PC-3 (cell line): ENCODE measurements at regions of chr1 and their contacts with region 1.

Region 1: DNA sequence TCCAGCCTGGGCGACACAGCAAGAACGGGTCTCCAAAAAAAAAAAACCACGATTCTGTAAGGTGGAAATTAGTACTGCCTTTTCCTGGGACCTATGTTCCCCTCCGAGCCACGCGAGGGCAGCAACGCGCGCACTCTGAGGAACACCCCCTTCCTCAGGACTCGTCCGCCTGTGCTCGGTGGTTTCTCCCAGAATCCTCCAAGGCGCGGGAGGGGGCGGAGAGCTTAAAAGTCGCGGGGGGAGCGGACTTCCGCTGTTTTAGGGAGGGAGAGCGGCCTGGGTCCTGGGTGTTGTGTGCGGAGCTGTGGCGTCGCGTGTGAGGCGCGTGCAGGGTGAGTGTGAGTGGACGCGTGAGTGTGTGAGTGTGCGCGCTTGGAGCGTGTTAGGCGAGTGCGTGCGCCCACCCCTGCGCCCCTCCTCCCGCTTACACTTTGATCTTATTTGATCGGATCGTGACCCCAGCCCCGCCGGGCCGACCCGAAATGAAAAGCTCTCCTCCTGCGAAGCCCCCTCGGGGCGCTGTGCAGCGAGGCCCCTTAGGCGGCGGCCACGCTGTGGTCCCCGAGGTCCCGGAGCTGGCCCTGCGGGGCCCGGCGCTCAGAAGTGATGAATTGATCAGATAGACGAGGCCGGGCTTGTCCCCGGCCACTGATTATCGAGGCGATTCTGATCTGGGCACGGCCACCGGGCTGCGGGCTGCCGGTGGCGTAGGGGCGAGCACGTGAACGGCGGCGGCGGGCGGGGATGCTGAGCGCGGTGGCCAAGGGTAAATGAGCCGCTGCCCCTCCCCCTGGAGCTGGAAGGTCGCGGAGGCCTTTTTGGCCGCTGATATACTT is 9.6 kb downstream of the TMEM167B start:
- DNase-seq: peak; percentile 97
- ATAC-seq: peak; percentile 91
- H3K4me3 ChIP-seq: peak overlapping the region; percentile 92
- H3K27ac ChIP-seq: peak overlapping the region; percentile 41; the same call in 1 of the 2 replicates
- H3K4me1 ChIP-seq: peaks cover 11% of the 10 kb centered on the region
- H3K27me3 ChIP-seq: no peaks in the 10 kb centered on the region
- CTCF ChIP-seq: peak; percentile 85

Region 2: GRCh38 chr1:109151164-109151990 is 51.2 kb after region 1 on chr1:
- CTCF ChIA-PET with region 1: no interaction called
- POLR2A ChIA-PET with region 1: interaction called, 3 read pairs
- intact Hi-C with region 1: loop called (anchors 1 kb)
- DNase-seq: peak; percentile 55
- ATAC-seq: peak; percentile 89
- H3K4me3 ChIP-seq: no peak overlapping the region
- H3K27ac ChIP-seq: peak overlapping the region; percentile 47
- H3K4me1 ChIP-seq: peaks cover 12% of the 10 kb centered on the region
- H3K27me3 ChIP-seq: no peaks in the 10 kb centered on the region
- CTCF ChIP-seq: no peak

Region 3: GRCh38 chr1:109617291-109617863 is 517.2 kb after region 1 on chr1:
- CTCF ChIA-PET with region 1: no interaction called
- POLR2A ChIA-PET with region 1: no interaction called
- intact Hi-C with region 1: no loop called
- DNase-seq: peak; percentile 48
- ATAC-seq: no peak
- H3K4me3 ChIP-seq: no peak overlapping the region
- H3K27ac ChIP-seq: no peak overlapping the region
- H3K4me1 ChIP-seq: peaks cover 24% of the 10 kb centered on the region
- H3K27me3 ChIP-seq: no peaks in the 10 kb centered on the region
- CTCF ChIP-seq: 0 out of 2 replicates have a peak, but pooled peaks have one; percentile 13